Transverse colon (tissue), 4 donors: ENCODE measurements at regions of chr12 and their contacts with region 1.

Region 1: GRCh38 chr12:45959728-45960127 is 30.6 kb downstream of the SCAF11 start:
- DNase-seq: no peak
- H3K4me3 ChIP-seq: no peak overlapping the region
- H3K27ac ChIP-seq: no peak overlapping the region
- H3K4me1 ChIP-seq: peaks cover 0 to 25% (median 9%) of the 10 kb centered on the region in 4 donors
- H3K27me3 ChIP-seq: no peaks in the 10 kb centered on the region
- CTCF ChIP-seq: no peak
- EP300 ChIP-seq: no peak
- POLR2A ChIP-seq: no peak

Region 2: GRCh38 chr12:45309836-45310626 is 649.7 kb before region 1 on chr12:
- in situ Hi-C with region 1: no loop called
- intact Hi-C with region 1: loop called (anchors 5 kb)
- DNase-seq: no peak
- H3K4me3 ChIP-seq: no peak overlapping the region
- H3K27ac ChIP-seq: peak overlapping the region; percentile 1 to 61 (median 43)
- H3K4me1 ChIP-seq: peaks cover 0 to 10% (median 4%) of the 10 kb centered on the region in 4 donors
- H3K27me3 ChIP-seq: no peaks in the 10 kb centered on the region
- CTCF ChIP-seq: peak in 1 of 5 experiments; percentile 4
- EP300 ChIP-seq: no peak
- POLR2A ChIP-seq: no peak